PC-3 (cell line): ENCODE measurements at regions of chr20 and their contacts with region 1.

Region 1: DNA sequence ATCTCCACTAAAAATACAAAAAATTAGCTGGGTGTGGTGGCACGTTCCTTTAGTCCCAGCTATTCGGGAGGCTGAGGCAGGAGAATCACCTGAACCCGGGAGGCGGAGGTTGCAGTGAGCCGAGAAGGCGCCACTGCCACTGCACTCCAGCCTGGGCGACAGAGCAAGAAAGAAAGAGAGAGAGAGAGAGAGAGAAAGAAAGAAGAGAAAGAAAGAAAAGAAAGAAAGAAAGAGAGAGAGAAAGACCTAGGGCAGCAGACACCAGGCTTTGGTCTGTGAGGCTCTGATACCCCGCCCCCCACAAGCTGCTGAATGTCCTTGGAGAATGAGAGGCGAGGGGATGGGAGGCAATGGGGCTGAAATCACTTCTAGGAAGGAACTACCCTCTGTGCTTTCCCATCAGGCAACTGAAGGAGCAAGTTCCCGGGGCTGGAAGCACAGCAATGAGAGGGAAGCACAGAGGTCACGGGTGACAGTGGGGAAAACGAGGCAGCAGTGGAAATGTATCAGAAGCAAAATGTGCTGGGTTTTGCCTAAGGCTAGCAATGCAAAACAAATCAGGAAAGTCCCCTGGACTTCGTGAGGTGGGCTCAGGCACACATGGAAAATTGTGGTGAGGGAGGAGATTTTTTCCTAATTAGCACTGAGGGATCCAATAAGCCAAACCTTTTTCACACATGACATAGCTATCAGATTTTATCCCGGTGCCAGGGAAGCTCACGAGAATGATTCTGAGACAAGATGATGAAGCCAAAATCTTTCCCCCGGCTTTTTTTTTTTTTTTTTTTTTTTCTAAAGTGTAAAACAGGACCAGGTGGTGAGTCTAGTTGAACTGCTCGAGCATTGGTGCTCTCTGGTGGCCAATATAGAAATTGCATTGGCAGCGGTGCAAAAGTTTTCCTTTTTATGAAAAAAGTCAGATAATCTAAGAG is 16.9 kb upstream of the ARFGEF2 start:
- DNase-seq: peak; percentile 93
- ATAC-seq: peak; percentile 50
- H3K4me3 ChIP-seq: peak overlapping the region; percentile 13; the same call in 1 of the 2 replicates
- H3K27ac ChIP-seq: no peak overlapping the region
- H3K4me1 ChIP-seq: peaks cover 9% of the 10 kb centered on the region
- H3K27me3 ChIP-seq: no peaks in the 10 kb centered on the region
- CTCF ChIP-seq: peak; percentile 95

Region 2: DNA sequence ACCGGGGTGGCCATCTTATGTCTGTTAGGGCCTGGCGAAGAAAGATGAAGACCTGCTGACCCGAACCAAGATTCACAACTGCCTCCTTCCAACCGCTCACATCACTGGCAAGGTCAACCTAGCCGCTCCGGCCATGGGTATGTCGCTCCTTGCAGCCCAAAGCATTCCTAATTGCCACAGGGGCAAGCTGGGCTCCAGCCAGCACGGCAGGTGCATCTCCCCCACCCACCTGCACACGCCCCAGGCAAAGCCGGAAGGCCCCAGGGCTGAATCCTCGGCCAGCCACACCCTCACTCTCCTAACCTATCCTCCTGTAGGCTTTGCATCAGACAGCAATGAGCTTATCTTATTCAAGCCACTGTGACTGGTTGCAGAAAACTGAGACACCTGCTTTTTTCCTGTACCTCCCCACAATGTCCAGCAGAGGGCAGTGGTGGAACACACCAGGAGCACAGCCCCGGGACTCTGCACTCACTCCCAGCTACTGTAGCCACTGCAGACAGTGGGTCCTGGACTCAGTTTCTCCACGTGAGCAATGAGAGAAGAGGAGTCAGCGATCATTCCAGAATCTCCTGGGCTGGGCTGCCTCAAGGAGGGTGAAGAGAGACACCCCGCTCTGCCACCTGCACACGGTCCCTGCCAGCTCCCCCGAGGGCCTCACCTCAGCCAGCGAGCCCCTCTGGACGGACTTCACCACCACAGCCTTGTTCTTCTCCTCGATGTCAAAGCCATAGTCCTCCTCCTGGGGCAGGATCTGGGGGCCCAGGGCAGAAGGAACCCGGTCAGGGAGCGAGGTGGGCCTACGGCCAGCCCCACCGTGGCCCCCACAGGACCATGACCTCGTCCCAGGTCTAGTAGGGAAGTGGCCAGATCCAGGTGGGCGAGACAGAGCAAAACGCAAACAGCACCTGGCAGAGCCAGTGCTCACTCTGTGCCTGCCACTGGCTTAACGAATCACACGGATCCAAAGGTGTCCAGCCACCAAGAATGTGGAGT is 246.9 kb before region 1 on chr20:
- CTCF ChIA-PET with region 1: interaction called, 70 read pairs
- POLR2A ChIA-PET with region 1: no interaction called
- intact Hi-C with region 1: loop called (anchors 1 kb)
- DNase-seq: peak; percentile 93
- ATAC-seq: peak; percentile 78
- H3K4me3 ChIP-seq: no peak overlapping the region
- H3K27ac ChIP-seq: no peak overlapping the region
- H3K4me1 ChIP-seq: no peaks in the 10 kb centered on the region
- H3K27me3 ChIP-seq: no peaks in the 10 kb centered on the region
- CTCF ChIP-seq: peak; percentile 99

Region 3: GRCh38 chr20:48875911-48876640 is 28.6 kb before region 1 on chr20:
- CTCF ChIA-PET with region 1: interaction called, 19 read pairs
- POLR2A ChIA-PET with region 1: no interaction called
- intact Hi-C with region 1: no loop called
- DNase-seq: no peak
- ATAC-seq: no peak
- H3K4me3 ChIP-seq: no peak overlapping the region
- H3K27ac ChIP-seq: no peak overlapping the region
- H3K4me1 ChIP-seq: peaks cover 17% of the 10 kb centered on the region
- H3K27me3 ChIP-seq: no peaks in the 10 kb centered on the region
- CTCF ChIP-seq: no peak

Region 4: DNA sequence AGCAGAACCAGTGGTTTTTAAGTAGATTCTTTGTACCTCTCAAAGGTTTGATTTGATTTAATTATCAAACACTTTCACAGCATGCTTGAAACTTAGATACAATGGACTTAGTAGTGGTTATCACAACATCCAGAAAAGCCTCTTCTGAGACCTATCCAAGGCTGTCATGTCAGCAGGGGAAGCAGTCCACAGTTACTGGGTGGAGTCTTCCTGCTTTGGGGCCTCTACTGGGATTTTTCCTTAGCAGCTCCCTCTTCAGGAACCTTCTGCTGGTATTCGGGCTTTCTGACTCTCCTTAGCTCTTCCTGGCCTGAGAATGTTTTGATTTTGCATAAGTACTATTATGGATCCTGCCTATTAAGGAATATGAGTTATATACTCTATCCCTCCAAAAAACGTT is 52.9 kb after region 1 on chr20:
- CTCF ChIA-PET with region 1: interaction called, 14 read pairs
- POLR2A ChIA-PET with region 1: interaction called, 3 read pairs
- intact Hi-C with region 1: no loop called
- DNase-seq: no peak
- ATAC-seq: 0 out of 2 replicates have a peak, but pooled peaks have one; percentile 17
- H3K4me3 ChIP-seq: no peak overlapping the region
- H3K27ac ChIP-seq: no peak overlapping the region
- H3K4me1 ChIP-seq: peaks cover 7% of the 10 kb centered on the region
- H3K27me3 ChIP-seq: no peaks in the 10 kb centered on the region
- CTCF ChIP-seq: no peak